Heart left ventricle (tissue), 16 donors: ENCODE measurements at regions of chr2 and their contacts with region 1.

Region 1: DNA sequence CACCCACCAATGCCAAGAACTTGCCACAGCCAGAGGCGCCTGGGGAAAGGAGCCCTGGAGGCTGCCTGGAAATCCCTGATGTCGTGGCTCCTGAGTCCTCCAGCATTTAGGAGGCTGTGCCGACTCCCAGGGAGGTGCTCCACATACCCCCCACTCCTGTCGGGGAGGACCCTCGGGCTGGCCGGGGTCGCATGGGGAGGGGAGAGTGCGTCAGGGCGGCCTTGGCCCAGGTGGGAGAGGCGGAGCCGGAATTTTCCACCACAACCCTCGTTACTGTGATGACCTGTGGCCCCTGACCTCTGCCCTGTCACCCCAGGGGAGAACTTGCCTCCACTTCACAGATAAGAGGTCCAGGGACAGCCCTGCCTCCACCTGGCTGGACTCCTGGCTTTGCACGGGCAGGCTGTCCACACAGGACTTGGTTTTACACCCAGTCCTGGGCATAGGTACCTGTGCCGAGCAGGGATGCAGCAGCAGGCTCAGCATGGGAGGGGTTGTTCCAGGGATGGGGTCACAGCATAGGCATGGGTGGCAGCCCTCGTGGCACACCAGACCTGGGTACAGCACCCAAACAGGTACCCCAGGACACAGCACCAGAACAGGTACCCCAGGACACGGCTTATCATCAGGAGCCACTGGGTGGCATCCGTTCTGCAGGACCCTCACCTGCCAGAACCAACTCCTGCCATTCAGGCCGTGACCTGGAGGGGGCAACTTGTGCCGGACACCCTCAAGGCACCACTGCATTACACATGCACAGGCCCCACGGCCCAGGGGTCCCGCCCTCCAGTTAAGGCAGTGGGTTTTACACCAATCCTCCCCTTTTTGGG is 12.3 kb upstream of the AGXT start:
- DNase-seq: no peak
- ATAC-seq: no peak
- H3K4me3 ChIP-seq: no peak overlapping the region
- H3K27ac ChIP-seq: no peak overlapping the region
- H3K4me1 ChIP-seq: no peaks in the 10 kb centered on the region
- H3K27me3 ChIP-seq: no peaks in the 10 kb centered on the region
- CTCF ChIP-seq: peak in 2 of 12 donors; percentile 16 to 27
- POLR2A ChIP-seq: no peak

Region 2: GRCh38 chr2:240991373-240992263 is 135.3 kb after region 1 on chr2:
- intact Hi-C with region 1: loop called in 7 of 10 experiments (anchors 2 to 10 kb)
- DNase-seq: peak; percentile 70 to 93 (median 86)
- ATAC-seq: peak; percentile 77 to 89 (median 84)
- H3K4me3 ChIP-seq: no peak overlapping the region
- H3K27ac ChIP-seq: peak overlapping the region in 11 of 12 donors; percentile 30 to 77 (median 58)
- H3K4me1 ChIP-seq: peaks cover 0 to 55% (median 28%) of the 10 kb centered on the region in 12 donors
- H3K27me3 ChIP-seq: no peaks in the 10 kb centered on the region
- CTCF ChIP-seq: no peak
- POLR2A ChIP-seq: peak in 1 of 2 donors; percentile 15

Region 3: GRCh38 chr2:241036397-241036963 is 180.1 kb after region 1 on chr2:
- intact Hi-C with region 1: no loop called
- DNase-seq: no peak
- ATAC-seq: peak in 3 of 4 donors; percentile 12 to 25 (median 18)
- H3K4me3 ChIP-seq: peak overlapping the region; percentile 3 to 50 (median 36)
- H3K27ac ChIP-seq: no peak overlapping the region
- H3K4me1 ChIP-seq: peaks cover 0 to 15% (median 6%) of the 10 kb centered on the region in 12 donors
- H3K27me3 ChIP-seq: no peaks in the 10 kb centered on the region
- CTCF ChIP-seq: no peak
- POLR2A ChIP-seq: no peak